ENCODE measurements at regions of chr1 and their contacts with region 1.

Region 1: DNA sequence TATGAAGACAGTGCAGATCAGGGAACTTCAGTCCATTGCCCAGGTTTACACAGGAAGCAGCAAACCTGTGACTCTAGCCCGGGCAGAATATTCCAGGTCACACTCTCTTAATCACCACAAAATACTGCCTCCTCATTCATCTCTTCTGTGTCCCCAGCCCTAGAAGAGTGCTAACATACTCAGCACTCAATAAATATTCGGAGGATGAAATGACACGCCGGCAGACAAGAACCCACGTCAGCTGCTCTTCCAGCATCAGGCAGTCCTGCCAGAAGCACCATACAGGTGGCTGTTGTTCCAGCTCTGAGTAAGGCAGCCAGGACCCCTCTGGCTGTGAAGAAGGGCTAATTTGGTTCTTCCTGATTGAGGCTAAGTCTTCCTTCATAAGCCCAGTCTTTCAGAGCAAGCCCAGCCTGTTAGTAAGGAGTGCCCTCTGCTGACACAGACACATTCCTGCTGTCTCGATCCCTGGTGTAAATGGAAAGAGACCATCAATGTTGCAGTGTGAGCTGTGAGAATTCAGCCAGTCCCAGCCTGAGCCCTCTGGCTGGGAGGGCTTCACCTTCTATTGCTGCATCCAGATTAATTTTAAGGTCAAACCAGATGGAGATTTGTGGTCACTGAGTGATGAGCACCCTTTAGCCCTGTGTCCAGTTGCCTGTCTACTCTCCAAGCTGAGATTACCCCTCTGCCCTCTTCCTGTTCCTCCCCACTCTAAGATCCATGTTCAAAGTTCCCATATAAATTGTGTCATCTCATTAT is 45.0 kb upstream of the KIRREL1 start:
- DNase-seq: no peak
- ATAC-seq: peak; percentile 81

Region 2: GRCh38 chr1:157878059-157878458 is 70.4 kb before region 1 on chr1:
- intact Hi-C with region 1: loop called (anchors 2 kb)
- DNase-seq: no peak
- ATAC-seq: peak; percentile 55

Measured in left ventricle myocardium superior (tissue), 1 donor.